Activated T-helper 2 cell treated with anti-CD3 and anti-CD28 coated beads, Interferon-gamma antibody, Interleukin-2, Interleukin-4, amounts not matched to agents 10 μg/mL and 5 μg/mL and 100 μg/mL, durations not matched to agents 14 hours and 24 hours and 36 hours (primary cell): ENCODE measurements at regions of chr3 and their contacts with region 1.

Region 1: GRCh38 chr3:49856181-49857005 is at the start of gene TRAIP:
- DNase-seq: peak; percentile 94
- H3K4me3 Mint-ChIP-seq: peak within 1 kb of the TSS; percentile 96
- H3K27ac Mint-ChIP-seq: peak within 1 kb of the TSS; percentile 88
- H3K4me1 Mint-ChIP-seq: peaks cover 14% of the 10 kb centered on the region
- H3K27me3 Mint-ChIP-seq: no peaks in the 10 kb centered on the region
- total RNA-seq, gene TRAIP: 21.0 and 26.6 TPM in 2 replicates

Region 2: DNA sequence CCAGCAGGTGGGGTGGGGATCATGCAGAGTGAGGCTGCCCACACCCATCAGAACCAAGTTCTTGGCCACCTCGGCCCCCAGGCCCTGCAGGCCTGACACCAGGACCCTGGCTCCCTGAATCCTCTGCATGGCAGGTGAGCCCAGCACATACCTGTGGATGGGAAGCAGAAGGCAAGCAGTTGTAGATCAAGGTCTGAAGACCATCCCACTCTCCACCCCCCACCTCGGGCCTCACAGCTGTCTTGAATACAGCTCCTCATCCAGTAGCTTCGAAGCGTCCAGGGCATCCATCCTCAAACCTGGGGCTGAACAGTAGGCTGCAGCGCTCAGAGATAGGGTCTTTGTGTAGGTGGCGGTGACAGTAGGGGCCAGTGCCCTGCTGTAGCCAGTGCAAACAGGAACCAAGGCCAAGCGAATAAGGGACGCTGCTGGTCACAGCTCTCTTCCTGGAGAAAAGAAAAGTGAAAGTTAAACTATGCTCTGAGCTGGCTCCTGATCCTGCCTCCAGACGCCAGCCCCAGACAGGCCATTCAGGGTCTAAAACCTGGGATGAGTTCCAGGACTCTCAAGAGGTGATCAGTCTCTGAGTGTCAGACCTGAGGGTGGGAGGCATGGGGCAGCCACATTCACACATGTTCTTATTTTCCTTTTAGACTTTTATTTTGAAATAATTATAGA is 42.8 kb before region 1 on chr3 and contains the start of gene UBA7:
- intact Hi-C with region 1: loop called (anchors 2 kb)
- DNase-seq: peak; percentile 45
- H3K4me3 Mint-ChIP-seq: peak within 1 kb of the TSS; percentile 92
- H3K27ac Mint-ChIP-seq: peak within 1 kb of the TSS; percentile 91
- H3K4me1 Mint-ChIP-seq: peaks cover 23% of the 10 kb centered on the region
- H3K27me3 Mint-ChIP-seq: no peaks in the 10 kb centered on the region
- total RNA-seq, gene UBA7: 92.0 and 95.7 TPM in 2 replicates

Region 3: DNA sequence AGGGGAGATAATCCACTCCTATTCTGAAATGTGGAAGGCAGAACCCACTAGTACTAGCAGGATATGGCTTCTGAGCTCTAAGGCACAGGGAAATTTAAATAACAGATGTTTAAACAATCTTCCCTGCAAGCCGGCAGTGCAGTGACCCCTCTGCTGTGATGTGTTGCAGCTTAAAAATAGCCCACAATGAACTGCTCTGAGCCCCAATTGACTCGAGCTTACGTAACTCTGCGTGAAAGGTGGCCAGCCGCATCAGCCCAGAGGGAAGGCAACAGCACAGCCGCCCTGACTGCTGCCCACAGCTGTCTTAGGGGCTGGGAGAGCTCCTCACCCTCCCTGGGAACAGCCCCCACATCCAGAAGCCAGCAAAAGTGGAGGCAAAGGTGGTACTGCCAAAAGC is 25.8 kb after region 1 on chr3:
- intact Hi-C with region 1: no loop called
- DNase-seq: no peak
- H3K4me3 Mint-ChIP-seq: no peak overlapping the region
- H3K27ac Mint-ChIP-seq: no peak overlapping the region
- H3K4me1 Mint-ChIP-seq: no peaks in the 10 kb centered on the region
- H3K27me3 Mint-ChIP-seq: no peaks in the 10 kb centered on the region

Region 4: GRCh38 chr3:49906004-49906743 is 49.8 kb after region 1 on chr3:
- intact Hi-C with region 1: loop called (anchors 1 kb)
- DNase-seq: peak; percentile 37
- H3K4me3 Mint-ChIP-seq: peak overlapping the region; percentile 54
- H3K27ac Mint-ChIP-seq: peak overlapping the region; percentile 44
- H3K4me1 Mint-ChIP-seq: peaks cover 25% of the 10 kb centered on the region
- H3K27me3 Mint-ChIP-seq: no peaks in the 10 kb centered on the region

Region 5: DNA sequence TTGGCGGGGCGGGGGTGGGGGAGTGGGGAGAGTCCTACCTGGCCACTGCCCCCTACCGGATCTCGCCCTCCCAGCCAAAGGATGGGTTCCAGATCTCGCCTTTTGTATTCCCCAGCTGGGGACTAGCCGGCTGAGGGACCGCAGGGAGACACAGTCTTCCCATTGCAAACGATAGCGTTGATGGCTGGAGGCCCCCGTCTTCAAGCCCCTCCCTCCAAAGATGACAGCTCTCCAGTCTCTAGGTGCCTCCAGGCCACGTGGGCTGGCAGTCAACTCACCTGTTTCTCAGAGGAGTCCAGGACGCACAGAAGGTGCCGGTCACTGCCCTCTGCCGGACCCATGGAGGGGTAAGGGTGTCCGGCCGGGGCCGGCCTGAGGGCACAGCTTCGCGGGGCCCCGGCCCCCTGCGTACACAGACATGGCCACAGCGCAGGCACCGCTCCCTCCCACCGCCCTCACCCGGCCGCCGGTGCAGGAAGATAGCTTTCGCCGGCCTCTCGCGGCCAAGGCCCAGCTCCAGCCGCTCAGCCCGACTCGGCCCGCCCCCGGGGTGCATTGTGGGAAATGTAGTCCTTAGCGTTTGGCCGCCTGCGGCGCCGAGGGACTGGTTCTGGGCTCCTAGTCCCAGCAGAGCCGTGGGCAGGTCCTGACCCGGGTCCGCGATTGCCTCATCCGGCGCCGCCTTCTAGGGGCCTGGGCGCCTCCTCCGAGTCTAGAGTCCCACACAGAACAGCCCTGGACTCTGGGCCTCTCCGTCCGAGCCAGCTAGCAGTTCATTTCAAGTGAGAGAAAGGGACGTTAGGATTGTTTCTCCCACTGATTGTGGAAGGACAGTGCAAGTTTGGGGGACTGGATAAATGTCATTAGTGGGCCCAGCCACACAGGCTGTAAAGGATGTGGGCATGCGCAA is 73.2 kb after region 1 on chr3 and contains the start of gene MON1A:
- intact Hi-C with region 1: no loop called
- DNase-seq: peak; percentile 84
- H3K4me3 Mint-ChIP-seq: peak within 1 kb of the TSS; percentile 90
- H3K27ac Mint-ChIP-seq: peak within 1 kb of the TSS; percentile 36
- H3K4me1 Mint-ChIP-seq: peaks cover 16% of the 10 kb centered on the region
- H3K27me3 Mint-ChIP-seq: no peaks in the 10 kb centered on the region
- total RNA-seq, gene MON1A: 15.1 and 15.7 TPM in 2 replicates